ENCODE measurements at regions of chr3 and their contacts with region 1.

Region 1: GRCh38 chr3:194852825-194853537 is 167.3 kb downstream of the FAM43A start:
- DNase-seq: peak; percentile 70 to 92
- H3K4me3 ChIP-seq: no peak overlapping the region
- H3K27ac ChIP-seq: no peak overlapping the region
- H3K4me1 ChIP-seq: peaks cover 11% of the 10 kb centered on the region
- H3K27me3 ChIP-seq: no peaks in the 10 kb centered on the region
- CTCF ChIP-seq: no peak

Region 2: DNA sequence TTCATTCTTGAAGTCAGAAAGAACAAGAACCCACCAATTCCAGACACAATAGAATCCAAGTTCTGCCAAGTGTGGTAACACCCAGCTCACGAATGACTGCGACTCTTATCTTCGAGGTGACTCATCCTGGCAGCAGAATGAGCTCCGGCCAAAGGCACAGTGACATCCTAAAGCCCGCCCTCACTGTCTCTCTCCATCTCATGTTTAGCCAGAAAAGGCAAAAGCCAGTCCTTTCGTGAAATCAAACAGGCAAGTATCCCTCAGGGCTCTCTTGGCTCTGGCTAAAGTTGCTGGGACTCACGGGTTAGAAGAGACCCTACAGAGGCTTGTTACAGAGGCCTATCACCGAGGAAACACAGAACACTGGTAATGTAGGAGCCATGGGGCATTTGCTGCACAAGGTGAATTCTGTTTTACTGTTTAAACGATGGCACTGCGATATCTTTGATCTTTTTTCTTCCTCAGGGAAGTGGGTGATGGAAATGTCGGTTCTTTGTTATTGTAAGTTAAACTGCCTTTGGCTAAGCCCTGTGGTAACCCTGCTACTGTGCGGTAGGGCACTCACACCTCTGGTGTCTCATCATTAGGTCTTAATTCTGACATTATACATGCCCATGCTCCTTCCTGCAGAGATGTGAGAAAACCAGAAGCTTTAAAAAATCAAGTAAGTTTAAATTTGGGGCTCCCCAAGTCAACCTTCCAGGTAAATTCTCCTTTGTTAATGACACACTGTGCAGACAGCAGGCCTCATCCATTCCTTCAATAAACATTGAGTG is 11.7 kb before region 1 on chr3:
- CTCF ChIA-PET with region 1: no interaction called
- POLR2A ChIA-PET with region 1: interaction called, 11 read pairs
- intact Hi-C with region 1: no loop called
- DNase-seq: peak; percentile 75 to 81
- H3K4me3 ChIP-seq: peak overlapping the region; percentile 32; the same call in 1 of the 2 replicates
- H3K27ac ChIP-seq: peak overlapping the region; percentile 7; the same call in 1 of the 2 replicates
- H3K4me1 ChIP-seq: peaks cover 13% of the 10 kb centered on the region
- H3K27me3 ChIP-seq: no peaks in the 10 kb centered on the region
- CTCF ChIP-seq: no peak

Region 3: GRCh38 chr3:194938804-194939534 is 86.0 kb after region 1 on chr3:
- CTCF ChIA-PET with region 1: interaction called, 11 read pairs
- POLR2A ChIA-PET with region 1: no interaction called
- intact Hi-C with region 1: no loop called
- DNase-seq: no peak
- H3K4me3 ChIP-seq: no peak overlapping the region
- H3K27ac ChIP-seq: no peak overlapping the region
- H3K4me1 ChIP-seq: peaks cover 12% of the 10 kb centered on the region
- H3K27me3 ChIP-seq: no peaks in the 10 kb centered on the region
- CTCF ChIP-seq: no peak

Region 4: GRCh38 chr3:195139841-195140240 is 286.9 kb after region 1 on chr3:
- CTCF ChIA-PET with region 1: no interaction called
- POLR2A ChIA-PET with region 1: interaction called, 23 read pairs
- intact Hi-C with region 1: no loop called
- DNase-seq: peak in 1 of 2 experiments; percentile 47
- H3K4me3 ChIP-seq: no peak overlapping the region
- H3K27ac ChIP-seq: no peak overlapping the region
- H3K4me1 ChIP-seq: 0 out of 2 replicates have a peak, but pooled peaks cover 4% of the 10 kb centered on the region
- H3K27me3 ChIP-seq: no peaks in the 10 kb centered on the region
- CTCF ChIP-seq: no peak

Region 5: DNA sequence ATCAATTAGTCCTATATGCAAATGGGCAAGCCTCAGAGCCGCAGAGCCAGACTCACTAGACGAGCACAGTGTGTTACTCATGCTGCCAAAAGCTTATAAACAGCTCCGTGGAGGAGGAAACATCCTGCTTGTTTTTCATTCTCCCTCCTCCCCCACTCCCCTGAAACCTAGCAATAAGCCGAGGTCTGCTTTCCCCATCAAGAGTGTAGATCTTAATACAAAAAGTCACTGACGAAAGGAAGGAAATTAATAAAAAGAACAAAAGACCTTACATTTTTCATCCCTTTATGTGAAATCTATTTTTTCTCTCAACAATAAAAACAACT is 329.5 kb after region 1 on chr3:
- CTCF ChIA-PET with region 1: no interaction called
- POLR2A ChIA-PET with region 1: no interaction called
- intact Hi-C with region 1: no loop called
- DNase-seq: no peak
- H3K4me3 ChIP-seq: no peak overlapping the region
- H3K27ac ChIP-seq: no peak overlapping the region
- H3K4me1 ChIP-seq: peaks cover 23% of the 10 kb centered on the region
- H3K27me3 ChIP-seq: no peaks in the 10 kb centered on the region
- CTCF ChIP-seq: no peak

Region 6: GRCh38 chr3:195207731-195208585 is 355.0 kb after region 1 on chr3:
- CTCF ChIA-PET with region 1: no interaction called
- POLR2A ChIA-PET with region 1: no interaction called
- intact Hi-C with region 1: no loop called
- DNase-seq: peak in 1 of 2 experiments; percentile 34
- H3K4me3 ChIP-seq: no peak overlapping the region
- H3K27ac ChIP-seq: no peak overlapping the region
- H3K4me1 ChIP-seq: 0 out of 2 replicates have a peak, but pooled peaks cover 9% of the 10 kb centered on the region
- H3K27me3 ChIP-seq: no peaks in the 10 kb centered on the region
- CTCF ChIP-seq: no peak

Measured in PC-9 (cell line).